Motor neuron (in vitro differentiated cells): ENCODE measurements at regions of chr2 and their contacts with region 1.

Region 1: DNA sequence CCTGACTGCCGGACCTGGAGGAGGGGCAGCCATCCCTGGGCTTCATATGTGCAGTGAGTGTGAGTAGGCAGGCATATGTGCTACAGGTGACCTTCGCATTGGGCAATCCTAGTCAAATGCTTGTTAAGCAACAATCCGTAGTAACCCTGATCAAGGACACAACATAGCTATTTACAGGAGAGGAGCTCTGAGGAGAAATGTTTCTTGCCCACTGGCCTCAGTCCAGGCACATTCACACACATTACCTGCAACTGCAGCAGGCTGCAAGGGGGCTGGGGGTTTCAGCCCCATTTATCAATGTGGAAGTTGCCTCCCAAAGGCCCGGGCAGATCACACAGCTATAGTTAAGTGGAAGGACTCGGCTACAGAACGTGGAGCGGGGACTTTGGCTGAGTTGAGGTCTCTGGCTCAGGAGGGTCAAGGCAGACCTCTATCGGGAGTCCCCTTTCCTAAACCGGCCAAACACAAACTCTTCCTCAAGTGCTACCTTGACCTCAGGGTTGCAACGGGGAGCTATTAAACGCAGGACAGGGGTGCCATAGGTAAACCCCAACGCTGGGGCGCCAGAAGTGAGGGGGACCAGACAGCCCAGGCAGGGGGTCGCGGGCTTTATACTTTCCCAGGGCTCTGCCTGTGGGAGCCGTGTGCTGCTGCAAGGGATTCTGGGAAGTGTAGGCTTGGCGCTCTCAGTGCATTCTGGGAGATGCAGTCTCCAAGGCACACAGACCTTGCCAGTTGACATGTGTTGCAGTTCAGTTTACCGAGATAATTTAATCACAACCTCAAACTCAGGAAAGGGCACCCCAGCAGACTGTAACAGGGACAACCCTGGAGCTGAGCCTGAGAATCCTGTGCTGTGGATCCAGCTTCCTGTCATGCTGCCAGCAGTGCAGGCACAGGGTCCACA is 9.4 kb downstream of the KHK start:
- ATAC-seq: peak; percentile 88 to 95 (median 90)
- H3K4me3 ChIP-seq: peak overlapping the region; percentile 8 to 20 (median 18)
- H3K27ac ChIP-seq: no peak overlapping the region
- H3K4me1 ChIP-seq: peaks cover 2 to 4% of the 10 kb centered on the region in 2 donors

Region 2: DNA sequence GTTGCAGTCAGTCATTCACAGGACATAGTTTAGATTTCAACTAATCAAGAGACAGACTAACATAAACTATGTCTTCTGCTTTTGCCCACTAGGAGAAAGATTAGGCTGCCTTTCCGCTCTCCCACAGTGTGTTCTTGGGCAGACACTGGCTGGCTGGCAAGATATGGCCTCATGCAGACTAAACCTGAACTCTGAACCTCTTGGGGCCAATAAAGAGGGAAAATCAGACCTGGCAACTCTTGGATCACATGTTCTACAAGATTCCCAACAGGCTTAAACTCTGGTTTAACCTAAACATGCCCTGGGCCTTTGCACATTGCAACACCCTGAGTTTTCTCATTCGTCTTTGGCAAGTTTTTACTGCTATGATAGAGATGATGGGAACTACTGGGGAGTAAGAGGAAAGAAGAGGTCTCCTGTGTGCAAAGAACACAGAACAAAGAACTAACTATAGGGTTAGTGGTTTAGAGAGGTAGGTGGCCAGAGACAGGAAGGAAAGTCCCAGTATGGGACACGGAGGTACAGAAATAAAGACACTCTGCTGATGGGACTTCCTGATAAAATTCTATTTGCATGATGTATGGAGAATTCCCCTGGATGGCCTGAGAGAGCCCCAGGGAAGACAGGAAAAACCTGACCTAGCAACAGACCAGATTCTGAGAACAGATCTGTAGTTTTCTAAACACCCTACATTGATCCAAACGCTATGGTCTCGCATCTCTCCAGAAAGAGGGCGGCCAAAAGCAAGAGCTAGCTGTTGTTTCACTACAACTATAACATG is 113.8 kb after region 1 on chr2:
- in situ Hi-C with region 1: loop called in 2 of 9 experiments (anchors 10 to 25 kb)
- ATAC-seq: no peak
- H3K4me3 ChIP-seq: no peak overlapping the region
- H3K27ac ChIP-seq: no peak overlapping the region
- H3K4me1 ChIP-seq: peaks cover 11 to 13% of the 10 kb centered on the region in 2 donors

Region 3: DNA sequence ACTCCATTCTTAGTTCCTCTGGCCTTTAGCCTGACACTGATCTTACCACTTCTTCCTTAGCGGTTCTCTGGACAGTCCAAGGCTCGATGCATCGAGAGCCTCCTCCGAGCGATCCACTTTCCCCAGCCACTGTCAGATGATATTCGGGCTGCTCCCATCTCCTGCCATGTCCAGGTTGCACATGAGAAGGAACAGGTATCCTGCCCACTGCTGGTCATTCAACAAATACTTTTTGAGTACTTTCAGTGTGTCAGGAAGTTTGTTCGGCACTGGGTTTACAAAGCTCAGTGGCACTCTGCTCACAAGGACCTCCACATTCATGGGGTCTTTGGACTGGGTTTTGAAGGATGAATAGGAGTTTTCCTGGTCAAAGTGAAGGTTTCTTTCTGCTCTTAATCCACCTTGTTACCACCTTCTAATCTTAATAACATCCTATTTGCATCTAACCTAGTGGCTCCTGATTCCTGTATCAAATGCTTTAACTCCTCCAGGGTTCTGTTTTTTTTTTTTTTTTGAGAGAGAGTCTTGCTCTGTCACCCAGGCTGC is 426.5 kb after region 1 on chr2:
- in situ Hi-C with region 1: no loop called
- ATAC-seq: no peak
- H3K4me3 ChIP-seq: no peak overlapping the region
- H3K27ac ChIP-seq: no peak overlapping the region
- H3K4me1 ChIP-seq: no peaks in the 10 kb centered on the region